MCF 10A (cell line): ENCODE measurements at regions of chr10 and their contacts with region 1.

Region 1: DNA sequence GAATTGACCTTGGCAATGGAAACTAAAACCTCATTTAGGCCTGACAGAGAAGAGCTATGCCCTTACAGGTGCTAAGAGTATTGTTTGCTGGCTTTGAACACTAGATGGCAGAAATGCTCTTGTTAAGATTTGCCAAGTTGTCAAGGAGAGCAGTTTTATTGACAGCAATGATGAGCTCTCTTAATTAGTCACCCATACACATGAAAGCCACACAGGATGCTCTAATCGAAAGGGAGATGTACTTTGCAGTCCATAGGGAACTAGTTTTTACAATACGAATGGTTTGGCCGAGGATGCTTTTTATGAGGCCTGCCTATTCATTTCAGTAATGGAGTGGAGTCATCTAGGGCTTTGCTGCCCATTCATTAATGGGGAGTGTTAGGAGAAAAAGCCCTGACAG is 45.4 kb upstream of the MBL2 start:
- DNase-seq: peak; percentile 80
- H3K4me3 Mint-ChIP-seq: no peak overlapping the region
- H3K27ac Mint-ChIP-seq: no peak overlapping the region
- H3K4me1 Mint-ChIP-seq: peaks cover 6% of the 10 kb centered on the region
- H3K27me3 Mint-ChIP-seq: no peaks in the 10 kb centered on the region
- CTCF ChIP-seq: peak; percentile 44

Region 2: GRCh38 chr10:52807803-52808202 is 10.2 kb before region 1 on chr10:
- CTCF ChIA-PET with region 1: interaction called, 13 read pairs
- POLR2A ChIA-PET with region 1: no interaction called
- intact Hi-C with region 1: no loop called
- DNase-seq: no peak
- H3K4me3 Mint-ChIP-seq: no peak overlapping the region
- H3K27ac Mint-ChIP-seq: no peak overlapping the region
- H3K4me1 Mint-ChIP-seq: no peaks in the 10 kb centered on the region
- H3K27me3 Mint-ChIP-seq: no peaks in the 10 kb centered on the region
- CTCF ChIP-seq: no peak

Region 3: DNA sequence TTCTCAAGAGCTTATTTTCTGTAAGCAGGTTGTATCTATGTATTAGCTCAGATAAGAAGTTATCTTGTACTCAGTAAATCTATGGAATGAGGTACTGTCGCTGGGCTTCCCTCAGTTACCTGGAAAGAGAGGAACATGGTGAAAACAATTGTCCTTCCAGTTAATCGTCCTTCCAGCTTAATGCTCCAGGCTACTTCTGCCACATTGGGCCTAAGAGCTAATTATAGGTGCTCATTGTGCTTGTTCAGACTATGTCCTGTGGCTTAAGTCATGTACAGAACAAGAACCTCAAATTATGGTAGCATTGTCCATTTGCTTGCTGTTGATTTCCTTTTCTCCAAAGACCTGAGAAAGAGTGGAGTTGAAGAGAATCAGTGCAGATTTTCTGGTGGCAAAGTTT is 40.7 kb after region 1 on chr10:
- CTCF ChIA-PET with region 1: interaction called, 10 read pairs
- POLR2A ChIA-PET with region 1: interaction called, 6 read pairs
- intact Hi-C with region 1: no loop called
- DNase-seq: no peak
- H3K4me3 Mint-ChIP-seq: no peak overlapping the region
- H3K27ac Mint-ChIP-seq: no peak overlapping the region
- H3K4me1 Mint-ChIP-seq: peaks cover 17% of the 10 kb centered on the region
- H3K27me3 Mint-ChIP-seq: no peaks in the 10 kb centered on the region
- CTCF ChIP-seq: no peak

Region 4: GRCh38 chr10:53033396-53033795 is 215.4 kb after region 1 on chr10:
- CTCF ChIA-PET with region 1: no interaction called
- POLR2A ChIA-PET with region 1: no interaction called
- intact Hi-C with region 1: no loop called
- DNase-seq: no peak
- H3K4me3 Mint-ChIP-seq: no peak overlapping the region
- H3K27ac Mint-ChIP-seq: no peak overlapping the region
- H3K4me1 Mint-ChIP-seq: peaks cover 11% of the 10 kb centered on the region
- H3K27me3 Mint-ChIP-seq: no peaks in the 10 kb centered on the region
- CTCF ChIP-seq: no peak

Region 5: GRCh38 chr10:53209944-53210611 is 392.1 kb after region 1 on chr10:
- CTCF ChIA-PET with region 1: interaction called, 20 read pairs
- POLR2A ChIA-PET with region 1: no interaction called
- intact Hi-C with region 1: loop called (anchors 1 kb)
- DNase-seq: peak; percentile 49
- H3K4me3 Mint-ChIP-seq: no peak overlapping the region
- H3K27ac Mint-ChIP-seq: no peak overlapping the region
- H3K4me1 Mint-ChIP-seq: no peaks in the 10 kb centered on the region
- H3K27me3 Mint-ChIP-seq: no peaks in the 10 kb centered on the region
- CTCF ChIP-seq: peak; percentile 45

Region 6: GRCh38 chr10:53314876-53315275 is 496.9 kb after region 1 on chr10:
- CTCF ChIA-PET with region 1: interaction called, 6 read pairs
- POLR2A ChIA-PET with region 1: no interaction called
- intact Hi-C with region 1: loop called (anchors 1 kb)
- DNase-seq: peak; percentile 86
- H3K4me3 Mint-ChIP-seq: no peak overlapping the region
- H3K27ac Mint-ChIP-seq: peak overlapping the region; percentile 16
- H3K4me1 Mint-ChIP-seq: peaks cover 6% of the 10 kb centered on the region
- H3K27me3 Mint-ChIP-seq: no peaks in the 10 kb centered on the region
- CTCF ChIP-seq: no peak